ENCODE measurements at regions of chr2 and their contacts with region 1.

Region 1: GRCh38 chr2:207166039-207166348 is 246 bp upstream of the KLF7 start:
- DNase-seq: peak; percentile 98
- H3K4me3 Mint-ChIP-seq: peak overlapping the region; percentile 95
- H3K27ac Mint-ChIP-seq: peak overlapping the region; percentile 96
- H3K4me1 Mint-ChIP-seq: peaks cover 43% of the 10 kb centered on the region
- H3K27me3 Mint-ChIP-seq: no peaks in the 10 kb centered on the region

Region 2: GRCh38 chr2:206765242-206766056 is 400.5 kb before region 1 on chr2 and contains the starts of genes FASTKD2 and MDH1B:
- CTCF ChIA-PET with region 1: no interaction called
- intact Hi-C with region 1: loop called (anchors 1 kb)
- DNase-seq: peak; percentile 91
- H3K4me3 Mint-ChIP-seq: peak within 1 kb of the TSS; percentile 89
- H3K27ac Mint-ChIP-seq: peak within 1 kb of the TSS; percentile 95
- H3K4me1 Mint-ChIP-seq: peaks cover 35% of the 10 kb centered on the region
- H3K27me3 Mint-ChIP-seq: no peaks in the 10 kb centered on the region
- total RNA-seq, gene FASTKD2: 21.4 to 22.8 TPM
- total RNA-seq, gene MDH1B: 0.86 TPM

Region 3: GRCh38 chr2:207012463-207012862 is 153.5 kb before region 1 on chr2:
- CTCF ChIA-PET with region 1: no interaction called
- intact Hi-C with region 1: no loop called
- DNase-seq: no peak
- H3K4me3 Mint-ChIP-seq: no peak overlapping the region
- H3K27ac Mint-ChIP-seq: no peak overlapping the region
- H3K4me1 Mint-ChIP-seq: no peaks in the 10 kb centered on the region
- H3K27me3 Mint-ChIP-seq: no peaks in the 10 kb centered on the region

Region 4: DNA sequence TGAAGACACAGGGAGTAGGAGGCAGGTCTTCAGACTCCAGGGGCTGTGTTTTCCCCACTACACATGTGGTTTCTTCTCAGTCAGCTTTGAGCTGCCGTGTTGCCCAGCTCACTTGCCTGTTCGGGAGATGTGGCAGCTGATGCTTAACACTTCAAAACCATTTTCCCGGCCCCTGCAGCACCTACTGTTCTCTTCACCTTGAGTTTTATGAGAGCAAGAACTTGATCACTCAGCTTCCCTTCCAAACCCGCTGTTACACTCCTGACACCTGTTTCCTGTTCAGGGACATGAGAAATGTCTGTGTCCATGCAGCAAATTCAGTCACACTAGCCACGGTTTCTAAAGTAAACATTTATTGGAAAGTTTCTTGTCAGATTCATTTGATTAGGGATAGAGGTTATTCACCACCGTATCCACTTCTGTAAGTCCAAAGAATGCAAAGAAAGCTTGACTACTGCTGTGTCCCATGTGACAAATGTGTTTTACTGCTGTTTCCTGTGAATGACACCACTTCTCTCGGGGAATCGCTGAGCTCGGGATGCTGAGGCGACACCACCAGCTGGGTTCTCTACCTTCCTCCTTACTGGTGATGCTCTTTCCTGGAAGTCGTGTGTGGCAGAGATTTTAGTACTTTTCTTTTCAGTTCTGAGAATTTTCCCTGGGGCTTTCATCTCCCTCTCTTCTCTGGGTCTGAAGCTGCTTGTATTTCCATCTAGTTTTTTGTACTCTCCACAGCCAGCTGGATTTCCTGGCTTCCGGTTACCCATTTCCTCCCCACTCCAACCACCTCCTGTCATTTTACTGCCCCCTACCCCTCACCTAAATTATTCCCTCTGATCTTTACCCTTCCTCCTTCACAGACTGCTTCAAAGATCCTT is 92.0 kb before region 1 on chr2:
- CTCF ChIA-PET with region 1: no interaction called
- intact Hi-C with region 1: loop called (anchors 1 kb)
- DNase-seq: peak; percentile 72
- H3K4me3 Mint-ChIP-seq: peak overlapping the region; percentile 64
- H3K27ac Mint-ChIP-seq: peak overlapping the region; percentile 85
- H3K4me1 Mint-ChIP-seq: peaks cover 27% of the 10 kb centered on the region
- H3K27me3 Mint-ChIP-seq: no peaks in the 10 kb centered on the region

Region 5: DNA sequence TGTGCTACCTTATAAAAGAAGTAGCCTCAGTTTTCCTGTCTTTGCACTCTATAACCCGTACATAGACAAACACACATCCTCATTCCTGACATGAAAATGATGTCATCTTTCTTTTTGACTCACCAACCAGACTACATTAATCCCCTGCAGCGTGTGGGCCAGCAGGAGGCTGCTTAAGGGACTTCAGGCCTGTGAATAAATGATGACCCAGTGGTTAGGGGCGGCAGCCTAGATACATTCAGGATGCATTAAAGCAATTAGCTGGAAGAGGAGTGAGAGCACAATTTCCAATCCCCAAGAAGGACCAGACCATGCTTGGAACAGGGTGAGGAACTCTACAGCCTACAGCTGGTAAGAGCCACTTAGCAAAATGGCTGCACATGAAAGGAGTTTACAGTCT is 57.1 kb after region 1 on chr2:
- CTCF ChIA-PET with region 1: no interaction called
- intact Hi-C with region 1: loop called (anchors 1 kb)
- DNase-seq: peak; percentile 50
- H3K4me3 Mint-ChIP-seq: no peak overlapping the region
- H3K27ac Mint-ChIP-seq: peak overlapping the region; percentile 32
- H3K4me1 Mint-ChIP-seq: peaks cover 43% of the 10 kb centered on the region
- H3K27me3 Mint-ChIP-seq: no peaks in the 10 kb centered on the region

Region 6: DNA sequence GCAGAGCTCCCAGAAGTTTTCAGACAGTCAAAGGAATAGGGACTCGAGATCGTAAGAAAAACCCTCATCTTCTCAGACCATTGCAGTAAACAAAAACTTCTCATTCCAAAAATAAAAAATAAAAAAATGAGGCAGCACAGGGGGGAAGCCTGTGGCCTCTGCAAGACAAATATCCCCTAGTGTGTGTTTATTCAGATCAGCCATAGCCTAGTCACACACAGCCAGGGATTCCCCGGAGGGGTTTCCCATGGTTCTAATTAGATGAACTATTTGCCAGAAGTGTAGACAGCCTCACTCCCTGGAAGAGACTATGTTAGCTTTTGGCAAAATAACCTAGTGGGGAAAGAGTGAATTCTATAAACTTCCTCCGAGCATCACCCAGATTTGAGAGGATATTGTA is 122.6 kb after region 1 on chr2:
- CTCF ChIA-PET with region 1: interaction called, 3 read pairs
- intact Hi-C with region 1: loop called (anchors 2 kb)
- DNase-seq: peak; percentile 84
- H3K4me3 Mint-ChIP-seq: no peak overlapping the region
- H3K27ac Mint-ChIP-seq: peak overlapping the region; percentile 33
- H3K4me1 Mint-ChIP-seq: peaks cover 73% of the 10 kb centered on the region
- H3K27me3 Mint-ChIP-seq: no peaks in the 10 kb centered on the region

Region 7: GRCh38 chr2:207334624-207335371 is 168.8 kb after region 1 on chr2:
- CTCF ChIA-PET with region 1: no interaction called
- intact Hi-C with region 1: loop called (anchors 1 kb)
- DNase-seq: peak; percentile 63
- H3K4me3 Mint-ChIP-seq: no peak overlapping the region
- H3K27ac Mint-ChIP-seq: peak overlapping the region; percentile 84
- H3K4me1 Mint-ChIP-seq: peaks cover 71% of the 10 kb centered on the region
- H3K27me3 Mint-ChIP-seq: no peaks in the 10 kb centered on the region

Region 8: DNA sequence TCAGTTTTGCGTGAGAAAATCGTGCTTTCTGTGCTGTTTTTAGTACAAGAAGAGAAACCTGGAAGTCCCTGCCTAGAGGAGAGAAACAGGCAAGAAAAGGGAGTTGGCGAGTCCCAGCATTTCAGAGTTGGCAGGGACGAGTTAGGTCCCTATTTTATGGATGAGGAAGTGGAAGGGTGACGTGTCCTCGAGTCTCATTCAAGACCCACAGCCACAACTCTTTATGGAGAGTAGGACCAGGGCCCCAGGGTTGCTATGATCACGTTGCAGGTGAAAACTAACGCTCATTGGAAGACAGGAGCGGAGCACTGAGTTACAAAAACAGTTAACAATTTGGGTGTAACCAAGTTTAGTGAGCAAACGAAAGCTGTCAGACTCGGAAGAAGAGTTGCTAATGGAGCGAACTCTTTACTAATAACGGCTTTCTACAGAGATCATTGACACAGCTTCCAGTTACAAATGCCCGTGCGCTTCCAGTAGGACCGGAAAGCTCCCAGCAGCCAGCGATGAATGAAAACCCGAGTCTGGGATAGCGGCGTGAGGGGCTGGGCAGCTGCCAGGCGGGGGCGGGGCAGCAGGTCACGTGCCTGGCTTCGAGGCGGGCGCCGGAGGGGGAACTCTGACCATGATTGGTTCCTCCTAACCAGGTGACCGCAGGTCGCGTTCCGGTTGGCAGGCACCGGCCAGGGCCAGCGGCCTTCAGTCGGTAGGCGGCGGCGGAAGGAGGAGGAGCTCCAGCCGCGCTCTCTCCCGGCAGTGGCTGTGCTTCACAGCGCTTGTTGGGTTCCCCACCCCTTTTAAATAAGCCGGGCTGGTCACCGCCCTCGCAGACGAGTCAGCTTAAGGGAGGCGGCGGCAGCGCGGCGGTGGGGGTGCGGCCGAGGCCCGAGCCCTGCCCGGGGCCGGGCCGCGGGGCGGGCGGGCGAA is 545.1 kb after region 1 on chr2 and contains the start of gene CCNYL1:
- CTCF ChIA-PET with region 1: no interaction called
- intact Hi-C with region 1: loop called (anchors 1 kb)
- DNase-seq: peak; percentile 98
- H3K4me3 Mint-ChIP-seq: peak within 1 kb of the TSS; percentile 88
- H3K27ac Mint-ChIP-seq: peak within 1 kb of the TSS; percentile 56
- H3K4me1 Mint-ChIP-seq: peaks cover 26% of the 10 kb centered on the region
- H3K27me3 Mint-ChIP-seq: no peaks in the 10 kb centered on the region
- total RNA-seq, gene CCNYL1: 2.5 to 2.7 TPM

Measured in activated naive CD4-positive, alpha-beta T cell treated with anti-CD3 and anti-CD28 coated beads for 36 hours (primary cell).